MCF 10A (cell line): ENCODE measurements at regions of chr10 and their contacts with region 1.

Region 1: DNA sequence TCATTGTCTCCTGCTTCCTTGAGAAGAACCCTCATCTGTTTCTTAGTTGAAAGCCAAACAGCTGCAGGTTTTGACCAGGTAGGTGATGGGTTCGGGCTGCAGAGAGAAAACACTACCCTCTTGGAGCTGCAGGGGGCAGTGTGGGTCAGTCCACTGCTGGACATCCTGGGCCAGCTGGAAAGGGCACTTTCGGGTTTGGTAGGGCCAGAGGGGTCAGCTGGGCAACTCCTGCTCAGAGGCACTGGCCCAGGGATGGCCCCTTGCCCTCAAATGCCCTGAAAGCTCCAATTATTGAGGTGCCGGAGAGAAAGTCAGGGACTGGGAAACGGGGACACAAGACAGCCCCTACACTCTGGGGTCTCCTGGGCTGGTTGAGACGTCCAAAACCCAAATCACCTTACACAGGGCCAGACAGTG is 90.7 kb downstream of the MKI67 start:
- DNase-seq: peak; percentile 64
- H3K4me3 Mint-ChIP-seq: no peak overlapping the region
- H3K27ac Mint-ChIP-seq: no peak overlapping the region
- H3K4me1 Mint-ChIP-seq: peaks cover 22% of the 10 kb centered on the region
- H3K27me3 Mint-ChIP-seq: no peaks in the 10 kb centered on the region
- CTCF ChIP-seq: peak; percentile 82

Region 2: DNA sequence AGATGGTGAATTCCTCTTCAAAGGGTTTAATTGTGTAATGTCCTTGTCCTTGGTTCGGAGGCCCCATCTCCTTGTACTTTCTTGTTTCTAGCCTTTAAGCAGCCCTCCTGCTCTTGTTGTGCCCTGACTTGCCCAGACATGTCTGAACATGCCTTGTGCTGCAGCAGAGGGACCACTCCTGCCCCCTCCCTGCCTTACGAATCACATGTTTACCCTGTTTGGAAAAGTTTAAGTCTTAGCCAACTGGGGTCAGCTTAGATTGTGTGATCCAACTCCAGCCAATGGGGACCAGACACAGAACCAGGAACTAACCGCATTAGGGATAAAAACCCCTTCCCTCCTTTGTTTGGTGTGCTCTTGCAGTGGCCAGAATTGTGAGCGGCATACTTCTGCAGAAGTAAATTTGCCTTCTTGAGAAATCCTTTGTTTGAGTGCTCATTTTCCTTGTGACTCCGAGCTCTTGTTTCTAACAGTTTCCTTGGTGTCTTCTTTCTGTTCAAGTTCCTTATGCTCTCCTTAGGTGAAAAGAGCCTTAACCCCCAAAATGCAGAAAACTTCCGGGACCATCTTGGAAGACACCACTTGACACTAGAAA is 172.2 kb before region 1 on chr10:
- CTCF ChIA-PET with region 1: no interaction called
- POLR2A ChIA-PET with region 1: no interaction called
- intact Hi-C with region 1: no loop called
- DNase-seq: peak; percentile 28
- H3K4me3 Mint-ChIP-seq: no peak overlapping the region
- H3K27ac Mint-ChIP-seq: peak overlapping the region; percentile 80
- H3K4me1 Mint-ChIP-seq: no peaks in the 10 kb centered on the region
- H3K27me3 Mint-ChIP-seq: peaks cover 18% of the 10 kb centered on the region
- CTCF ChIP-seq: no peak

Region 3: DNA sequence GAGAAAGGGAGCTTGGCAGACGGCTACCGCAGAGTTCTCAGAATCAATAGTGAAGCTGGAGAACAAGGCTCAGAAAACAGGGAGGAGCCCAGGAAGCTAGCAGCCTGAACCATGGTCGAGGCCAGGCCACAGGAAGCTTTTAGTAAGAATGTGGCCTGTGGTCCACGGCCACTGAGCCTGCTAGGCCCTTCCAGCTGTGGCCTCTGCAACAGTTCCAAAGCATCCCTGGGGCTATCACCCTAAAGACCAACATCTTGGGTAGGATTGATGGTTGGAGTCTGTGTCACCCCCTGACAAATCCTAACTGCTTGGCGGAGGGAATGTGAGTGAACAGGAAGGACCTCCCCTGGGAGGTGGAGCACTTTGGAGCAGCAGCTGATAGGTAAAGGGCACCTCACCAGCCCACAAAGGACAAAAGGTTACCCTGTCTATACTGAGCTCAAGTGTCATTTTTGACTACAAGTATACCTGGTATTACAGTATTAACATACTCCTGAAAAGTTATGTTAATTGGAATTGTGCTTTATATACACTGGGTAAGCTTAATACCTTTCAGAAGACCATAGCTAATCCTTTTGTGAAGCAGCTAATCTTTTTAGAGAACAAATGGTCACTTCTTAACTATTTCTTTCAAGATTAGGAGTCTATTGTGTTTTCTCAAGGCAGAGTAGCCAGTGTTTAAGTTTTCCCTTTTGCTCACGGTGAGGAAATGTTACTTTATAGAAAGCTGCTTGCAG is 109.9 kb before region 1 on chr10:
- CTCF ChIA-PET with region 1: interaction called, 12 read pairs
- POLR2A ChIA-PET with region 1: no interaction called
- intact Hi-C with region 1: no loop called
- DNase-seq: no peak
- H3K4me3 Mint-ChIP-seq: no peak overlapping the region
- H3K27ac Mint-ChIP-seq: no peak overlapping the region
- H3K4me1 Mint-ChIP-seq: peaks cover 17% of the 10 kb centered on the region
- H3K27me3 Mint-ChIP-seq: no peaks in the 10 kb centered on the region
- CTCF ChIP-seq: no peak

Region 4: GRCh38 chr10:128047351-128047750 is 11.8 kb after region 1 on chr10:
- CTCF ChIA-PET with region 1: interaction called, 146 read pairs
- POLR2A ChIA-PET with region 1: interaction called, 21 read pairs
- intact Hi-C with region 1: no loop called
- DNase-seq: peak; percentile 96
- H3K4me3 Mint-ChIP-seq: peak overlapping the region; percentile 78
- H3K27ac Mint-ChIP-seq: peak overlapping the region; percentile 91
- H3K4me1 Mint-ChIP-seq: peaks cover 21% of the 10 kb centered on the region
- H3K27me3 Mint-ChIP-seq: no peaks in the 10 kb centered on the region
- CTCF ChIP-seq: no peak

Region 5: DNA sequence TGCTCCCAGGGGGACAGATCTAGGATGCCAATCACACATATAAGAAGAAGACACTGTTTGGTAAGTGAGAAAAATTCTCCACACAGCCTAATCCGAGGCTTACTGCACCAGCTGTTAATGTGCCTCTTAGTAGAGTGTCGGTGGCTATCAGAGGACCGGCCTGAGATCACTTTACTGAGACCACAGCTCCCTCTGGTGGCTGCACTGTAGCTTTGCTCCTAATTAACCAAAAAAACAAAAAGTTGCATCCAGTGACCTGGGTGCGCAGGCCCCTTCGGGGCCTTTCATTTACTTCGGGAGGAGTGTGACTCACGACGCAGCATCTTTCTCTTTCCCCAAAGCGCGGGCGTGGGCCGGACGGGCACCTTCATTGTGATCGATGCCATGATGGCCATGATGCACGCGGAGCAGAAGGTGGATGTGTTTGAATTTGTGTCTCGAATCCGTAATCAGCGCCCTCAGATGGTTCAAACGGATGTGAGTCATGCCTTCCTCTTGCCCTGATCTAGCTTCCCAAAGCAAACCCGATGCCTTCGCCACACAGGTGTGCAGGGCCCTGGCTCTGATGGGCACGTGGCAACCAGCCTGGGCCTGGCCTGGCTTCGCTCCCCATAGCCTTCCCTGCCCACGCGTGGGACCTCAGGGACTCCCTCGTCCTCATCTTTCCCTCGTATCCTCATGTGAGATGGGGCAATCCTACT is 33.9 kb after region 1 on chr10:
- CTCF ChIA-PET with region 1: interaction called, 354 read pairs
- POLR2A ChIA-PET with region 1: interaction called, 12 read pairs
- intact Hi-C with region 1: loop called (anchors 1 kb)
- DNase-seq: peak; percentile 79
- H3K4me3 Mint-ChIP-seq: no peak overlapping the region
- H3K27ac Mint-ChIP-seq: peak overlapping the region; percentile 70
- H3K4me1 Mint-ChIP-seq: peaks cover 25% of the 10 kb centered on the region
- H3K27me3 Mint-ChIP-seq: no peaks in the 10 kb centered on the region
- CTCF ChIP-seq: peak; percentile 85

Region 6: GRCh38 chr10:128125944-128126764 is 90.6 kb after region 1 on chr10 and contains the start of gene MKI67:
- CTCF ChIA-PET with region 1: interaction called, 10 read pairs
- POLR2A ChIA-PET with region 1: no interaction called
- intact Hi-C with region 1: no loop called
- DNase-seq: peak; percentile 96
- H3K4me3 Mint-ChIP-seq: peak within 1 kb of the TSS; percentile 76
- H3K27ac Mint-ChIP-seq: peak within 1 kb of the TSS; percentile 87
- H3K4me1 Mint-ChIP-seq: peaks cover 32% of the 10 kb centered on the region
- H3K27me3 Mint-ChIP-seq: no peaks in the 10 kb centered on the region
- CTCF ChIP-seq: no peak
- total RNA-seq, gene MKI67: 40.4 and 81.4 TPM in 2 replicates

Region 7: DNA sequence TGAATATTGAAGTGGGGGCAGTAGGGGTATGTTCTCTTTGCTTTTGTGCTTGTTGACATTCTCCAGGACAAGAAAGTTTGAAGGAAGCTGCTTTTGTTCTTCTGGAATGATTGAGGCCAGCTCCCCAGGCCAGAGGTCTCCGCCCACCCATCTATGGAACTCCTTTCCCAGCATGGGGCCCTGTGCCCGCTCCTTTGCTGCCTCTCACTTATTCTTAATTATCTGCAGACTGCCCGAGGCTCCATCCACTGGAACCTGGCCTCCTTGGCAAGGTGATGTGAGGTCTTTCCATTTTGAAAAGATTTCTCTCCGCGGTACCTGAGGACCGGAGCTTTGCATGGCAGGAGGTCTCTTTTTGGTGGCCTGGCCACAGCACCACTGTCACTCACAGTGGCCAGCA is 130.0 kb after region 1 on chr10:
- CTCF ChIA-PET with region 1: interaction called, 10 read pairs
- POLR2A ChIA-PET with region 1: no interaction called
- intact Hi-C with region 1: no loop called
- DNase-seq: no peak
- H3K4me3 Mint-ChIP-seq: no peak overlapping the region
- H3K27ac Mint-ChIP-seq: no peak overlapping the region
- H3K4me1 Mint-ChIP-seq: no peaks in the 10 kb centered on the region
- H3K27me3 Mint-ChIP-seq: peaks cover 30% of the 10 kb centered on the region
- CTCF ChIP-seq: no peak